Naive thymus-derived CD8-positive, alpha-beta T cell (primary cell): ENCODE measurements at regions of chr11 and their contacts with region 1.

Region 1: GRCh38 chr11:67391304-67392132 is at the start of gene RAD9A:
- DNase-seq: peak; percentile 85 to 95 (median 90)
- ATAC-seq: peak; percentile 81 to 84
- H3K4me3 Mint-ChIP-seq: peak within 1 kb of the TSS; percentile 81 to 90 (median 87)
- H3K27ac Mint-ChIP-seq: peak within 1 kb of the TSS; percentile 68 to 93 (median 88)
- H3K4me1 Mint-ChIP-seq: peaks cover 30 to 47% (median 43%) of the 10 kb centered on the region in 4 donors
- H3K27me3 Mint-ChIP-seq: no peaks in the 10 kb centered on the region
- polyA plus RNA-seq, gene RAD9A: 6.5 to 9.4 (median 6.6) TPM

Region 2: GRCh38 chr11:67373925-67374618 is 17.4 kb before region 1 on chr11:
- POLR2A ChIA-PET with region 1: interaction called, 10 read pairs
- DNase-seq: peak in 7 of 10 donors; percentile 17 to 75 (median 43)
- ATAC-seq: peak; percentile 36 to 51
- H3K4me3 Mint-ChIP-seq: peak overlapping the region; percentile 80 to 88 (median 84)
- H3K27ac Mint-ChIP-seq: peak overlapping the region in 7 of 10 donors; percentile 58 to 87 (median 80)
- H3K4me1 Mint-ChIP-seq: peaks cover 30 to 49% (median 44%) of the 10 kb centered on the region in 4 donors
- H3K27me3 Mint-ChIP-seq: peaks cover 0 to 8% (median 0%) of the 10 kb centered on the region in 5 donors

Region 3: DNA sequence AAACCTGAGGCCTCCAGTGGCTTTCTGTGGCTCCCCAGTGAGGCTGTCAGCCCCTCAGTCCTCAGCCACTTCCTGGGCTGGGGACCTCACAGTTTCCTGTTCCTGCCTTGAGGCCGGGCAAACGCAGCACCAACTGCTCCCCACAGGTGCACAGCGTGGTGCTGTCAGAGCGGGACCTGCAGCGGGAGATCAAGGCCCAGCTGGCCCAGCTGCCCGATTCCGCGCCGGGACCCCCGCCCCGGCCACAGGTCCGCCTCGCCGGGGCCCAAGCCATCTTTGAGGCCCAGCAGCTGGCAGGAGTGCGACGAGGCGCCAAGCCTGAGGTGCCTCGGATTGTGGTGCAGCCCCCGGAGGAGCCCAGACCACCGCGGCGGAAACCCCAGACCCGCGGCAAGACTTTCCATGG is 17.7 kb after region 1 on chr11:
- POLR2A ChIA-PET with region 1: interaction called, 2,390 read pairs
- DNase-seq: peak; percentile 46 to 90 (median 76)
- ATAC-seq: peak; percentile 73 to 85
- H3K4me3 Mint-ChIP-seq: peak overlapping the region; percentile 93 to 99 (median 98)
- H3K27ac Mint-ChIP-seq: peak overlapping the region; percentile 53 to 98 (median 94)
- H3K4me1 Mint-ChIP-seq: peaks cover 44 to 96% (median 88%) of the 10 kb centered on the region in 4 donors
- H3K27me3 Mint-ChIP-seq: no peaks in the 10 kb centered on the region

Region 4: DNA sequence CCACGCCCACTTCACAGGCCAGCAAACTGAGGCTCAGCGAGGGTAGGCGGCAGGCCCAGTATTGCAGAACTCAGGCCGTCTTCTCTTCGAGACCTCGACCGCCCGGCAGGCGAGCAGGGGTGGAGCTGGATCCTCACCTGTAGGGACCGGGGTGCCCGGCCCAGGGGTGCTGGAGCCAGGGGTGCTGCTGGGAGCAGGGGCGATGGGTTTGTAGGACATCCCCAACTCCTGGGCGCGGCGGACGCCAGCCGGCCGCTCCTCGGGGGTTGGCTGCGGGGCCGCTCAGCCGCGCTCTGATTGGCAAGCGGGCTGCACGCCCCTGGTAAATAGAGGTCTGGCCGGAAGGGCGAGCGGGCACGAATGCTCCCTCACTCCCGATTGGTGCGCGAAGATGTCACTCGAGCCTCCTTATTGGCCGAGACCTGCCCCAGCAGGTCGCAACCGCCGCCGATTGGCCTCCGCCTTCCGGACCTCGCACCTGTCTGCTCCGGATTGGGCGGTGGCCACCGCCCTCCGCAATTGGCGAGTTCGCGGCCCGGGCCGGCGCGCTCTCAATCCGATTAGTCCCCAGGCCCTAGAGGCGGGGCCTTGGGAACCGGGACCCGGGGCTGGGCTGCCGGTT is 116.5 kb after region 1 on chr11 and contains the start of gene CDK2AP2:
- POLR2A ChIA-PET with region 1: interaction called, 10 read pairs
- DNase-seq: peak in 9 of 10 donors; percentile 92 to 99 (median 96)
- ATAC-seq: peak; percentile 74
- H3K4me3 Mint-ChIP-seq: peak within 1 kb of the TSS; percentile 81 to 94 (median 92)
- H3K27ac Mint-ChIP-seq: peak within 1 kb of the TSS; percentile 83 to 99 (median 97)
- H3K4me1 Mint-ChIP-seq: peaks cover 26 to 47% (median 39%) of the 10 kb centered on the region in 4 donors
- H3K27me3 Mint-ChIP-seq: peaks cover 0 to 5% (median under 1%) of the 10 kb centered on the region in 5 donors
- polyA plus RNA-seq, gene CDK2AP2: 75.9 to 96.8 (median 79.5) TPM